Activated CD4-positive, alpha-beta T cell treated with anti-CD3 and anti-CD28 coated beads for 36 hours (primary cell): ENCODE measurements at regions of chr19 and their contacts with region 1.

Region 1: DNA sequence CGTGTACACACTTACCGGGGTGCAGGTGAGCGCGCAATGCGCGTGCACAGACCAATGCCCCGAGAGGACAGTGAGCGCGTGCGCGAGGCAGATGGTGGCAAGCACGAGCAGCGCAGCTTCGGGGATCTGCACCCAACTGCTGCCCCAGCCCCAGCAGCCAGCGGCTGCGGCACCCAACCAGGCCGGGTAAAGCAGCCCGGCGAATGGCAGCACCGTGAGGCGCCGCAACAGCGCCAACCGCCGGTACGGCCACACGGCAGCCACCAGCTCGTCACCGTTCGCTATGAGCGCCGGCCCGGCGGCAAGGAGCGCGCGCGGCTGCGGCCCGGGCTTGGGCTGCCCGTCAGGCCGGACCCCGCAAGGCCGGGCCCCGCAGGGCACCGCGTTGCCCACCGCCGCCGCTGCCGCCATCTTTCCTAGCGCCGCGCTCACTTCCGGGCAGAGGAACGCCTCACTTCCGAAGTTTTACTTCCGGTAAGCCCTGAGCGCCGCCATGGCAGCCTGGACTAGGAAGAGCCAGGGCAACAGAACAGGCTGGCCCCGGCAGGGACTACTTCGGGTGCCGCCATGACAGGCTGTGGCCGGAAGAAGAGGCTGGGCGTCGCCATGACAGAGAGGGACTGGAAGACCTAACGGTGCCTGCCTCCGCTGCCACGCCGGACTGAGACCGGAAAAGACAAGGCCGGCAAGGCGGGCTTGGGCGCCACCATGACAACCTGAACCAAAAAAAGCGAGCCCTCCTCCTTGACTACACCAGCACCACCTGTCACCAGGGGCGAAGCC is at the start of gene ATP13A1:
- DNase-seq: peak; percentile 95
- ATAC-seq: peak; percentile 77
- H3K4me3 Mint-ChIP-seq: peak within 1 kb of the TSS; percentile 78
- H3K27ac Mint-ChIP-seq: peak within 1 kb of the TSS; percentile 98
- H3K4me1 Mint-ChIP-seq: peaks cover 35% of the 10 kb centered on the region
- H3K27me3 Mint-ChIP-seq: no peaks in the 10 kb centered on the region
- total RNA-seq, gene ATP13A1: 61.8 to 71.2 TPM

Region 2: GRCh38 chr19:19320362-19321142 is 342.9 kb before region 1 on chr19 and contains the starts of genes MAU2 and SUGP1:
- CTCF ChIA-PET with region 1: no interaction called
- POLR2A ChIA-PET with region 1: no interaction called
- intact Hi-C with region 1: loop called in 1 of 2 experiments (anchors 1 kb)
- DNase-seq: peak; percentile 96
- ATAC-seq: peak; percentile 93
- H3K4me3 Mint-ChIP-seq: peak within 1 kb of the TSS; percentile 93
- H3K27ac Mint-ChIP-seq: peak within 1 kb of the TSS; percentile 100
- H3K4me1 Mint-ChIP-seq: peaks cover 39% of the 10 kb centered on the region
- H3K27me3 Mint-ChIP-seq: no peaks in the 10 kb centered on the region
- total RNA-seq, gene MAU2: 33.3 to 45.7 TPM
- total RNA-seq, gene SUGP1: 49.4 to 62.0 TPM

Region 3: GRCh38 chr19:19515764-19516519 is 147.5 kb before region 1 on chr19 and contains the start of gene NDUFA13:
- CTCF ChIA-PET with region 1: interaction called, 3 read pairs
- POLR2A ChIA-PET with region 1: no interaction called
- intact Hi-C with region 1: loop called in 1 of 2 experiments (anchors 1 kb)
- DNase-seq: peak; percentile 95
- ATAC-seq: peak; percentile 94
- H3K4me3 Mint-ChIP-seq: peak within 1 kb of the TSS; percentile 83
- H3K27ac Mint-ChIP-seq: peak within 1 kb of the TSS; percentile 92
- H3K4me1 Mint-ChIP-seq: peaks cover 25% of the 10 kb centered on the region
- H3K27me3 Mint-ChIP-seq: no peaks in the 10 kb centered on the region
- total RNA-seq, gene NDUFA13: 310 to 323 TPM

Region 4: DNA sequence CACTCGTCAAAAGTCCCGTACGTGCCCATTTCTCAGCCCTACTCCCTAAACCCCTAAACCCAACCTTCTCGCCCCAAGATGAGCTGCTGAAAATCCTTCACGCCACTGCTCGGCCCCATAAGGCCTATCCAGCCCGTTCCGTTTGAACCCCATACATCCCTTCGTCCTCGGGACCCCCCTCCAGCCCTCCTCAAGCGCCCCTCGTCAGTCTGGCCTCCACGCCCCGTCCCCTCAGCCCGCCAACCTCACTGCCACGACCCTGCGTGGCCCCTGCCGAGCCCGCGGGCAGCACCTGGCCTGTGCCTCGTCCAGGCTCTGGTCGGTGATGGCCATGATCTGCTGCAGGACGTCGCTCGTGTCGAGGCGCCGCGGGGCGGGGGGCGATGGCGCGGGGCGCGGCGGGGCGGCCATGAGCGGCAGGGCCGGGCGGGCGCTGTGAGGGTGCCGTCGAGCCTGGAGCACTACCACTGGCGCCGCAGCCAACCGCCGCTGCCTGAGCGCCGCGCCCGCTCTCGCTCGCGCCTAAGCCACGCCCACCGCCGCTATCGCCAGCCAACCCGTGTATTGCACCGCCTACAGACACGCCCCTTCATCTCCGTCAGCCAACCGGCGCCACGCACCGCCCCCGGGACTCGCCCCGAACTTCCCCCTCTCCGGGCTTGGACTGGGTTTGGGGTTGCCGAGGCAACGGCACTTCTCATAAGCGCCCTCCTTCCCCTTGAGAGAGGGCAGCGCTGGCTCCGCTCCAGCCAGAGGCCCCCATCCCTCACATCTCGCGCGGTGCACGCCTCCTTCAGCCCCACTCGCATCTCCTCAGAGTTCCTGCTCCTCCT is 45.0 kb before region 1 on chr19 and contains the start of gene PBX4:
- CTCF ChIA-PET with region 1: interaction called, 5 read pairs
- POLR2A ChIA-PET with region 1: no interaction called
- intact Hi-C with region 1: loop called (anchors 1 kb)
- DNase-seq: peak; percentile 99
- ATAC-seq: peak; percentile 93
- H3K4me3 Mint-ChIP-seq: peak within 1 kb of the TSS; percentile 91
- H3K27ac Mint-ChIP-seq: peak within 1 kb of the TSS; percentile 90
- H3K4me1 Mint-ChIP-seq: peaks cover 46% of the 10 kb centered on the region
- H3K27me3 Mint-ChIP-seq: no peaks in the 10 kb centered on the region
- total RNA-seq, gene PBX4: 19.4 to 21.2 TPM

Region 5: DNA sequence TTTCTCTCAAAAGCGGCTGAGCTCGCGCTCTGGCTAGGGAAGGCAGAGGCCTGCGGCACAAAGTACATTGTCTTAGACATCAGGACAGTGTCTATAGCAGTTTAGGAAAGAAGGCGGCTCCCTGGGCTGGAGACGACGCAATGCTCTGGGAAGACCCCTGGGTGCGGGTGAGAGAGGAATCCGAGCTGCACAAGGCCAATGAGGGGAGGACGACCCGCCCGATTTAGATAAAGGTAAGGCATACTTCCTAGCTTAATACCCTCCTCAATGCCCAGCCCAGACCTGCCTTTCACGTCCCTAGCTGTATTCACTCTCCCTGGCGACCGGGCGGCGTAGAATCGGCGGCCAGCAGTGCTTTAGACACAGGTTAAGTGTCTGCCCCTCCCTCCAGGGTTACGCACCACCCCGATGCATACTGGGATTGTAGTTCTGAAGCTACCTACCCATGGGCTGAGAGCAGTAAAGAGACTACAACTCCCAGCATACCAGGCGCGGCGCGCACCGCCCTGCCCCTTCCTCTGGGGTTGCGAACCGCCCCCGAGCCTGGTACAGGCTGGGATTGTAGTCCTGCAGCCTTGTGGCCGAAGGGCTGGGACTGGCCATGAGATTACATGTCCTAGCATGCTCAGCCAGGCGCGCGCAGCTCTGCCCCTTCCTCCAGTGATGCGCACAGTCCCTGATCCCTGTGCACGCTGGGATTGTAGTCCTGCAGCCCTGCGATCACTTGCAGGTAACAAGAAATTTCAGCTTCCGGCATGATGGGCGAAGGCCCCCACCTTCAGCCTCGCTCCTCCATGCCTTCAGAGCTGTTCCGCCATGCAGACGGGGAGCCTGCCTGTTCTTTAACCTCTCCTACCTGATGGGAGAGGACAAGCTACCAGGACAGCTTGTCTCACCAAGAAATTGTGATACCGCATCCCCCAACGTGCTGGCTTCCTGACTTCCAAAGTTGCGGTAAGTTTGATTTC is 112.9 kb after region 1 on chr19:
- CTCF ChIA-PET with region 1: no interaction called
- POLR2A ChIA-PET with region 1: interaction called, 4 read pairs
- intact Hi-C with region 1: loop called (anchors 1 to 5 kb)
- DNase-seq: peak; percentile 96
- ATAC-seq: peak; percentile 99
- H3K4me3 Mint-ChIP-seq: peak overlapping the region; percentile 98
- H3K27ac Mint-ChIP-seq: peak overlapping the region; percentile 85
- H3K4me1 Mint-ChIP-seq: peaks cover 37% of the 10 kb centered on the region
- H3K27me3 Mint-ChIP-seq: no peaks in the 10 kb centered on the region

Region 6: DNA sequence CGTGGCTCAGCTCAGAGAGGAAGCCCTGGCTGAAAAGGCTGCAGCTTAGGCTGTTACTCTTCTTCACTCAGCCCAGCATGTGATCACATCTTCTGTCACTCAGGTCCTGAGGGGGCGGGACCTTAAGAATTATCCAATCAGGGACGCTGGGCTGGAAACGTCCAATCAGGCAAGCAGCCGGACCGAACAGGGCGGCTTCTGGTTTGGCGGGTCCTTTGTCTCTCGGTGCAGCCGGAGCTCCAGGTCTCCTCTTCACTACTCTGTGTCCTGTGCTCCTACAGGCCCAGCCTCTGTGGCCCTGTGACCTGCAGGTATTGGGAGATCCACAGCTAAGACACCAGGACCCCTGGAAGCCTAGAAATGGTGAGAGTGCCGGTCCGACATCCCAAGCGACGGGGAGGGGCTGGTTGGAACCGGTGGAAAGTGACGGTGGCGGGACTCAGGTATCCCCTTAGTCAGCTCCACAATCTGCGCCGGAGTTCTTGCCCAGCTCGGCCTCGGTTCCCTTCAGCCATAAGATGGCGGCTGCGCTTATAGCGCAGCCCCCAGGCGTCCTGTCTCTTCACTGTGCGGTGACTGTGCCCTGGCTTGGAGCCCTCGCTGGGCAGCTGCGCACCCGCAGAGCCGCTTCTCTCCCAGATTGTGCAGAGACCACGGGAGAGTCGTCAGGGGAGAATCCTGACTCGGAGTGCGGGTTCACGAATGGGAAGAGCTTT is 237.4 kb after region 1 on chr19 and contains the start of gene ZNF93:
- CTCF ChIA-PET with region 1: no interaction called
- POLR2A ChIA-PET with region 1: no interaction called
- intact Hi-C with region 1: loop called in 1 of 2 experiments (anchors 1 kb)
- DNase-seq: peak; percentile 95
- ATAC-seq: peak; percentile 95
- H3K4me3 Mint-ChIP-seq: peak within 1 kb of the TSS; percentile 99
- H3K27ac Mint-ChIP-seq: peak within 1 kb of the TSS; percentile 97
- H3K4me1 Mint-ChIP-seq: peaks cover 39% of the 10 kb centered on the region
- H3K27me3 Mint-ChIP-seq: no peaks in the 10 kb centered on the region
- total RNA-seq, gene ZNF93: 21.7 to 22.3 TPM